Activated naive CD8-positive, alpha-beta T cell treated with anti-CD3 and anti-CD28 coated beads, Interleukin-2, amount 10 ng/mL, durations not matched to agents 7 days and 5 days (primary cell): ENCODE measurements at regions of chr6 and their contacts with region 1.

Region 1: GRCh38 chr6:27146706-27147505 is 100.6 kb upstream of the PRSS16 start:
- DNase-seq: peak; percentile 83
- ATAC-seq: peak; percentile 71
- H3K4me3 Mint-ChIP-seq: no peak overlapping the region
- H3K27ac Mint-ChIP-seq: no peak overlapping the region
- H3K4me1 Mint-ChIP-seq: peaks cover 18% of the 10 kb centered on the region
- H3K27me3 Mint-ChIP-seq: no peaks in the 10 kb centered on the region

Region 2: DNA sequence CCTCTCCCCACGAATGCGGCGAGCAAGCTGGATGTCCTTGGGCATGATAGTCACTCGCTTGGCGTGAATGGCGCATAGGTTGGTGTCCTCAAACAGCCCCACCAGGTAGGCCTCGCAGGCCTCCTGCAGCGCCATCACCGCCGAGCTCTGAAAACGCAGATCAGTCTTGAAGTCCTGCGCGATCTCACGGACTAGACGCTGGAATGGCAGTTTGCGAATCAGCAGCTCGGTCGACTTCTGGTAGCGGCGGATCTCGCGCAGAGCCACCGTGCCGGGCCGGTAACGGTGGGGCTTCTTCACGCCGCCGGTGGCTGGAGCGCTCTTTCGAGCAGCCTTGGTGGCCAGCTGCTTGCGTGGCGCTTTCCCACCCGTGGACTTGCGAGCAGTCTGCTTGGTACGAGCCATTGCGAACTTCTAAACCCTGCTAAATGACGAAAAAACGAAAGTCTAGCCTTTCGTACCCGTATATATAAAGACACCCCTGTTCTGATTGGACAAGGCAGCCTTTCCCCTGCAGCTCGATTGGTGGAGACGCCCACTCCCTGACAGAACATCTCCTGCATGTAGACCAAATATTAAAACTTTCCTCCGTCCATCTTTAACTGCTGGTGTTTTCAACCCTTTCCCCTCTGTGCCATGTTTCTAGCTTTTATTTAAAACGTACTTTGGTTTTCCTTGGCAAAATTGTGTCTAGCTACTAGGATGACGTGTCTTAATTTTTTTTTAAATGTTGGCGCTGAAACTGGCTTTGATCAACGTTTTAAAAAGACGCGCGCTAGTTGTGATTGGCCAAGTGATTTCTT is 949.9 kb before region 1 on chr6:
- POLR2A ChIA-PET with region 1: interaction called, 52 read pairs
- DNase-seq: peak; percentile 83
- ATAC-seq: peak; percentile 44
- H3K4me3 Mint-ChIP-seq: peak overlapping the region; percentile 87
- H3K27ac Mint-ChIP-seq: peak overlapping the region; percentile 96
- H3K4me1 Mint-ChIP-seq: peaks cover 48% of the 10 kb centered on the region
- H3K27me3 Mint-ChIP-seq: no peaks in the 10 kb centered on the region

Region 3: DNA sequence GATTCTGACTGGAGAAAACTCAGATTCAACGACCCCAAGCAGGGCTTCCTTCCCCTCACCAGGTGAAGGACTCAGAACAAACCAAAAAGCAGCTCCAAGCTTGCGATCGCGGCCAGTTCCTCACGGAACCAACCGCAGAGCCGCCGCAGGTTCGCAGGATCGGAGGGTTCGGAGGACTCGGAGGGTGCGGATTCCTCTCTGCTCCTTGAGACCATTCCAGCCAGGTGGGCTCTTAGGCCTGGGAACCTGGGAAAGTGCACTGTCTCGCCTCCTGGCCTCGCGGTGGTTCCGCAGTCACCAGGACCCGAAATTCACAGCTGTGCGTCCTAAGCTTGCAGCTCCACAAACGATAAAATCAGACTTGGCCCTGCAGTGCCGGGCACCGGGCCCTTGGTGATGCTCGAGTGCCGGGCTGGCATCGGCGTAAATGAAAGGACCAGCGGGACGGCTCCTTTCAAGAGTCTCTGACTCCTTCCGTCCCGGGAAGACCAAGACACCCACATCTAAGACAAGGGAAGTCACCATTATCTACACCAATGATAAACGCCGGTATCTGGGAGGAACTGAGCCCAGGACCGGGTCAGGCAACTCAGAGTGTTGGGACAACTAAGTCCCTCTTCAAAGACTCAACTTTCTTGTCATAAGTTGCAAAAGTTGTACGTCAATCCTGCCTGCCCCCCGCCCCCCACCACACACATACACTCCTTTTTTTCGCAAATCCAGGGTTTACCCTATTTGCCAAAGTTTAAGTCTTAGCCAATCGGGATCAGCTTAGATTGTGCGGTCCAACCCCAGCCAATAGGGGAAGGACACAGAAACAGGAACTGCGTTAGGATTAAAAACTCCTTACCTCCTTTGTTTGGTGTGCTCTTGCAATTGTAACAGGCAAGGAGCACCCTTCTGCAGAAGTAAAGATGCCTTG is 30.8 kb after region 1 on chr6:
- POLR2A ChIA-PET with region 1: interaction called, 20 read pairs
- DNase-seq: peak; percentile 78
- ATAC-seq: peak; percentile 84
- H3K4me3 Mint-ChIP-seq: peak overlapping the region; percentile 98
- H3K27ac Mint-ChIP-seq: peak overlapping the region; percentile 91
- H3K4me1 Mint-ChIP-seq: peaks cover 8% of the 10 kb centered on the region
- H3K27me3 Mint-ChIP-seq: peaks cover 38% of the 10 kb centered on the region

Region 4: DNA sequence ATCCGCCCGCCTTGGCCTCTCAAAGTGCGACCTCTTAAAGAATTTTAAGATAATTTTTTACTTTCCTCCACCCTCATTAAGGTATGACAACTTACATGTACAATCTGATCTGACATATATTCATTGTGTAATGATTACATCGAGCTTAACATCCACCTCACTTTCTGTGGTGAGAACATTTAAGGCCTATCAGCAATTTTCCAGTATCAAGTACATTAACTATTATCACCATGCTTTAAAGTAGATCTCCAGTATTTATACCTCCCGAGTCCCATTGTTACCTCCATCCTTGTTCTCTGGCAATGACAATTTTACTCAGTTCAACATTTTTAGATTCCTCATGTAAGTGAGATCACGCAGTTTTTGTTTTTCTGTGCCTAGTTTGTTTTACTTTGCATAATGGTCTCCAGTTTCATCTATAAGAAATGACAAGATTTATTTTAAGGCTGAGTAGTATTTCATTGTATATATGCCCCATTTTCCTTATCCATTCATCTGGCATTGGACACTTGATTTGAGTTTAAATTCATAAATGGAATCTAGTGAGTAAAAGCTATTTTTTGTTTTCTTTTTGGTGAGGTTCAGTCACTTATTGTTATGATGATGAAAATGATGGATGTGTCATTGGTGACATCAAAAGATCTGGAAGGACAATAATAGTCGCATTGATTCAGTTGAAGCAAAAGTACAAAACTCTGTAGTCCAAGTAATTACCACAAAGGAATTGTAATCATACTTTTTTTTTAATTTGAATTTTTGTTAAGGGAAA is 678.3 kb after region 1 on chr6:
- POLR2A ChIA-PET with region 1: interaction called, 41 read pairs
- DNase-seq: no peak
- ATAC-seq: peak; percentile 2
- H3K4me3 Mint-ChIP-seq: peak overlapping the region; percentile 90
- H3K27ac Mint-ChIP-seq: peak overlapping the region; percentile 99
- H3K4me1 Mint-ChIP-seq: peaks cover 39% of the 10 kb centered on the region
- H3K27me3 Mint-ChIP-seq: no peaks in the 10 kb centered on the region

Region 5: DNA sequence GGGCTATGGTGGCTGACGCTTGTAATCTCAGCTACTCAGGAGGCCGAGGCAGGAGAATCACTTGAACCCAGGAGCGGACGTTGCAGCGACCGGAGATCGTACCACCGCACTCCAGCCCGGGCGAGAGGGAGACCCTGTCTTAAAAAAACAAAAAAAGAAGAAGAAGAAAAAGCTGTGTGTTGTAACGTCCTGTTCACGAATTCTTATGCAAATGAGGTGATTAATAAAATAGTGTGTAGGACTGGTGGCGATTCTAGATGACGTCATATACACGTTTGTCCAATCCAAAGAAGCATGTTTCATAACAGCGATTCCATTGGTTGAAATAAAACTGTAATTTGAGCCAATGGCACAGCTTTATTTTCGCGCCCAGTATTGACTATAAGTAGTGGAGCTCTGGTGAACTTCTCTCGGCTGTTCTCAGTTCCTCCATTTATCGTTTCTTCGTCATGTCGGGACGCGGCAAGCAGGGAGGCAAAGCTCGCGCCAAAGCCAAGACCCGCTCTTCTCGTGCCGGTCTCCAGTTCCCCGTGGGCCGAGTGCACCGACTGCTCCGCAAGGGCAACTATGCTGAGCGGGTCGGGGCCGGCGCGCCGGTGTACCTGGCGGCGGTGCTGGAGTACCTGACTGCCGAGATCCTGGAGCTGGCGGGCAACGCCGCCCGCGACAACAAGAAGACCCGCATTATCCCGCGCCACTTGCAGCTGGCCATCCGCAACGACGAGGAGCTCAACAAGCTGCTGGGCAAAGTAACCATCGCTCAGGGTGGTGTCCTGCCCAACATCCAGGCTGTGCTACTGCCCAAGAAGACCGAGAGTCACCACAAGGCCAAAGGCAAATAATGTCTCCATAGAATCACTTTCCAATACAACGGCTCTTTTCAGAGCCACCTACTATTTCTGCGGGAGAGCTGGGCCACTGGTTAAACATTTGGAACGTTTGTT is 718.3 kb after region 1 on chr6:
- POLR2A ChIA-PET with region 1: interaction called, 204 read pairs
- DNase-seq: peak; percentile 83
- ATAC-seq: peak; percentile 56
- H3K4me3 Mint-ChIP-seq: peak overlapping the region; percentile 99
- H3K27ac Mint-ChIP-seq: peak overlapping the region; percentile 100
- H3K4me1 Mint-ChIP-seq: peaks cover 57% of the 10 kb centered on the region
- H3K27me3 Mint-ChIP-seq: no peaks in the 10 kb centered on the region